ENCODE measurements at regions of chr21 and their contacts with region 1.

Region 1: GRCh38 chr21:29024474-29025327 is at the start of gene USP16:
- DNase-seq: peak; percentile 96
- ATAC-seq: peak; percentile 97
- H3K4me3 Mint-ChIP-seq: peak within 1 kb of the TSS; percentile 99
- H3K27ac Mint-ChIP-seq: peak within 1 kb of the TSS; percentile 98
- H3K4me1 Mint-ChIP-seq: peaks cover 47% of the 10 kb centered on the region
- H3K27me3 Mint-ChIP-seq: no peaks in the 10 kb centered on the region
- total RNA-seq, gene USP16: 31.8 to 33.7 TPM

Region 2: DNA sequence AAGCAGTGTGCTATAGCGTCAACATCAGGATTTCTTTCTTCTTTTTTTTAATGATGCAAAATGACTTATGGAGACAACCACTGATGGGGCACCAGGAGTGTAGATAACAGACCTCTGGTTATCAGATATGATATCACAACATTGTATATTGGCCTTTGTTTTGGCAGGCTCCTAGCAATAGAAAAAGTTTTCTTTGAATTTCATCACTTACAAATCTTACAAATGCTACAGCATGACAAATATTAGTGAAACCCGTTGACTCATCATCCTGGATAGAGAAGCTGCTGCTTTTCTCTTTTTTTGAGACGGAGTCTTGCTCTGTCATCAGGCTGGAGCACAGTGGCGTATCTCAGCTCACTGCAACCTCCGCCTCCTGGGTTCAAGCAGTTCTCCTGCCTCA is 125.0 kb before region 1 on chr21:
- CTCF ChIA-PET with region 1: no interaction called
- POLR2A ChIA-PET with region 1: no interaction called
- DNase-seq: no peak
- ATAC-seq: no peak
- H3K4me3 Mint-ChIP-seq: no peak overlapping the region
- H3K27ac Mint-ChIP-seq: no peak overlapping the region
- H3K4me1 Mint-ChIP-seq: peaks cover 1% of the 10 kb centered on the region
- H3K27me3 Mint-ChIP-seq: peaks cover 14% of the 10 kb centered on the region

Region 3: DNA sequence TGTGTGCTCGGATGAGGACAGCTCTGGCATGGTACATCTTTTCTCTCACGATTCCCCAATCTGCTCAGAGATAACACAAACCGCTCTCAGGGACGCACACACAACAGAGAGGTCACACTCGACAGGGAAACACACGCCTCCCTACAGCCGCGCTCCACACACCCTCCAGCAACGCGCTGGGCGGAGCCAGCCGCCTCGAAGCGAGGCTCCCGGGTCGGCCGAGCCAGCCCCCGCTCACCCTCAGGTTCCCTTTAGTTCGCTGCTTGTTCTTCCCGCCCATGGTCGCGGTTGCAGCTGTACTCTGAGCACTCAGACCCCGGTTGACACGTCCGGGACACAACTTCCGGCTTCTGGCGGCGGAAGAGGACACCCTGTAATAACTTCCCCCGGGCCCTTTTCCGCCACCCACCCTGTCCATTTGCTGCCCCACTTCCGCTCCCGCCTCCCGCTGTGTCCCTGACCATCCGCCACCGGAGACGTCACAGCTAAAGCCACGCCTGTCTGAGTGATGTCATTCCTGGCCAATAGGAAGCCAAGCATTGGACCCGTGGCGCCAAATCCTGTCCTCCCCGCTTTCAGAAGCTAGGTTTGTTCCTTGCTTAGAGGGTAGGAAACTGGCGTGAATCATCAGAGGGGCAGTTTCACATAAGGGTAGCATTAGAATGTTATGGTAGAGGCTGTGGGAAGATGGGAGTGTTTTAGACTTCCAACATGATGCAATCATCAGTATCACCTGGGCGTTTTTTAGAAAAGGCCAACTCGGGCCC is 32.0 kb before region 1 on chr21 and contains the start of gene LTN1:
- CTCF ChIA-PET with region 1: interaction called, 5 read pairs
- POLR2A ChIA-PET with region 1: interaction called, 47 read pairs
- DNase-seq: peak; percentile 100
- ATAC-seq: peak; percentile 94
- H3K4me3 Mint-ChIP-seq: peak within 1 kb of the TSS; percentile 84
- H3K27ac Mint-ChIP-seq: peak within 1 kb of the TSS; percentile 98
- H3K4me1 Mint-ChIP-seq: peaks cover 28% of the 10 kb centered on the region
- H3K27me3 Mint-ChIP-seq: no peaks in the 10 kb centered on the region
- total RNA-seq, gene LTN1: 23.5 to 25.9 TPM

Region 4: DNA sequence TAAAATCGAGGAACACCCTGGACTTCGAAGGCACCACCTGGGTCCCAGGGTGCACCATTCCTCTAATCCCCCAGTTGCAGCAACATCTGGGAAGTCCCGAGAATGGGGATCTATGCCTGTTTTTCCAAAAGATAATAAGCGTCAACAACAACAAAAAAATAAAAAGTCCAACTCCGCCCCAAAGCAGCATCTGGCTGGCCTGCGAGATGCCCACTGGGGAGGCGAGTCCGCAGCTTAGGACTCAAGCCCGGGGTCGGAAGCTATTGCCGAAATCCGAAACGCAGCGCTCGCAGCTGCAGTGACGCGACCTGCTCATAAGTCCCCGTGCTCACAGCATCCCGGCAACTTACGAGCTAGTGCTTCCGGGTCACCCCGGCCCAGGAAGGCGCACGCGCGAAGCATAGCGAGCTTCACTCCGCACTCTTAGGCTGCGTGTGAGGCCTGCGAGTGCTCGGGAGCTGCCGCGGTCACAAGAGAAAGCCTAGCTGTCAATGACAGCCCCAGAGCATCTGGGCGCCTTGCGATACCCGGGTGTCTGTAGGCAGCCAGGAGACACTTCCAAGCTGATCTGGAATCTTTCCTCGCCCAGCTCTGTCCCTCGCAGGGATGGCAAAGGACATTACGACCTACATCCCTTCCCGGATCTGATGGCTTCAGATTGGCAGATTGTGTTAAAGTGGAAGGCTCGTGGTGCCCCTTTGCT is 22.1 kb before region 1 on chr21:
- CTCF ChIA-PET with region 1: interaction called, 14 read pairs
- POLR2A ChIA-PET with region 1: interaction called, 93 read pairs
- DNase-seq: peak; percentile 97
- ATAC-seq: peak; percentile 100
- H3K4me3 Mint-ChIP-seq: peak overlapping the region; percentile 88
- H3K27ac Mint-ChIP-seq: peak overlapping the region; percentile 96
- H3K4me1 Mint-ChIP-seq: peaks cover 19% of the 10 kb centered on the region
- H3K27me3 Mint-ChIP-seq: no peaks in the 10 kb centered on the region

Region 5: DNA sequence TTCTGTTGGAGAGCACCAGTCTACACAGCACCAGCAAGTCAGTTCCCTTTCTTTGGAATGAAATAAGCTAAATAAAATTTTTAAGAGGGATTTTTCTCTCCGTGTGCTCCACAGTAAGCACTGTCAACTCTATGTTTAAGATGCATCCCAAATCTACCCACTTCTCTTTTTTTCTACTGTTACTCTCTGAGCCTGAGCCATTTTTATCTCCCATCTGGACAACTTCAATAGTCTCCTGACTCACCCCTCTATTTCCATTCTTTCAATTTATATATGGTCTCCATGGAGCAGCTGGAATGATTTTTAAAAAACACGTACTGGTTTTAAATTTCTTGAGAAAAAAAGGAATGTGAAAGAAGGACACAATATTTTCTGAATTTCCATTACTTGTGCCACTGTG is 73.5 kb after region 1 on chr21:
- CTCF ChIA-PET with region 1: no interaction called
- POLR2A ChIA-PET with region 1: no interaction called
- DNase-seq: no peak
- ATAC-seq: no peak
- H3K4me3 Mint-ChIP-seq: no peak overlapping the region
- H3K27ac Mint-ChIP-seq: no peak overlapping the region
- H3K4me1 Mint-ChIP-seq: no peaks in the 10 kb centered on the region
- H3K27me3 Mint-ChIP-seq: no peaks in the 10 kb centered on the region

Measured in activated CD8-positive, alpha-beta T cell treated with anti-CD3 and anti-CD28 coated beads, Interleukin-2, amount 10 ng/mL, durations not matched to agents 7 days and 5 days (primary cell).